Activated T-helper 1 cell treated with anti-CD3 and anti-CD28 coated beads, Interleukin-12 subunit alpha, Interleukin-12 subunit beta, Interleukin-2, Interleukin-4 antibody, amounts not matched to agents 30 ng/mL and 10 ng/mL and 1 ng/mL, durations not matched to agents 14 hours and 24 hours and 36 hours (primary cell): ENCODE measurements at regions of chr6 and their contacts with region 1.

Region 1: DNA sequence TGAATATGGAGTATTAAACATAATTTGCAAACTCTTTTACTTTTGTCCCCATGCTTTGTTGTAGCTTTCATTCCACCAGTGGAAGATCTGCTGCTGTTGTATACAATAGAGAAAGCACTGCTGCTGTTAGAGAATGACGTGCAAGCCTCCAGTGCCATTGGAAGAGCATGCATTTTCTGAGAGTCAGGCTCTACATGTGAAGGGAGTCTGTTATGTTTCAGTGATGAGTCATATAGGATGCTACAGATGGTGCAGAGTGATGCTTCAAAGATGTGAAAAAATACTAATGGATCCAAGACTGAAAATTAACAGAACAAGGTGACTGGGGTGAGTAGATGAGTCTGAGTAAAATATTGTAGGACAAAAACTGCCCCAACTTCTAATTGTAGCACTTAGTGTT is 22.4 kb upstream of the BACH2 start:
- DNase-seq: no peak
- H3K4me3 Mint-ChIP-seq: no peak overlapping the region
- H3K27ac Mint-ChIP-seq: peak overlapping the region; percentile 63
- H3K4me1 Mint-ChIP-seq: peaks cover 19% of the 10 kb centered on the region
- H3K27me3 Mint-ChIP-seq: peaks cover 4% of the 10 kb centered on the region

Region 2: GRCh38 chr6:90256698-90257485 is 62.2 kb before region 1 on chr6:
- intact Hi-C with region 1: loop called (anchors 2 kb)
- DNase-seq: peak; percentile 27
- H3K4me3 Mint-ChIP-seq: peak overlapping the region; percentile 0
- H3K27ac Mint-ChIP-seq: peak overlapping the region; percentile 87
- H3K4me1 Mint-ChIP-seq: peaks cover 78% of the 10 kb centered on the region
- H3K27me3 Mint-ChIP-seq: no peaks in the 10 kb centered on the region